Aorta (tissue), 5 donors: ENCODE measurements at regions of chr5 and their contacts with region 1.

Region 1: GRCh38 chr5:181254707-181255106 is 6.2 kb downstream of the TRIM52 start:
- DNase-seq: no peak
- ATAC-seq: no peak
- H3K4me3 ChIP-seq: no peak overlapping the region
- H3K27ac ChIP-seq: no peak overlapping the region
- H3K4me1 ChIP-seq: peaks cover 2% of the 10 kb centered on the region in 2 donors
- H3K27me3 ChIP-seq: no peaks in the 10 kb centered on the region

Region 2: GRCh38 chr5:181217111-181217802 is 37.5 kb before region 1 on chr5:
- intact Hi-C with region 1: loop called in 1 of 2 experiments (anchors 5 kb)
- DNase-seq: peak; percentile 70 to 86
- ATAC-seq: peak; percentile 70
- H3K4me3 ChIP-seq: peak overlapping the region; percentile 2 to 32
- H3K27ac ChIP-seq: peak overlapping the region in 1 of 2 donors; percentile 28
- H3K4me1 ChIP-seq: no peaks in the 10 kb centered on the region
- H3K27me3 ChIP-seq: no peaks in the 10 kb centered on the region